PC-9 (cell line): ENCODE measurements at regions of chrX and their contacts with region 1.

Region 1: DNA sequence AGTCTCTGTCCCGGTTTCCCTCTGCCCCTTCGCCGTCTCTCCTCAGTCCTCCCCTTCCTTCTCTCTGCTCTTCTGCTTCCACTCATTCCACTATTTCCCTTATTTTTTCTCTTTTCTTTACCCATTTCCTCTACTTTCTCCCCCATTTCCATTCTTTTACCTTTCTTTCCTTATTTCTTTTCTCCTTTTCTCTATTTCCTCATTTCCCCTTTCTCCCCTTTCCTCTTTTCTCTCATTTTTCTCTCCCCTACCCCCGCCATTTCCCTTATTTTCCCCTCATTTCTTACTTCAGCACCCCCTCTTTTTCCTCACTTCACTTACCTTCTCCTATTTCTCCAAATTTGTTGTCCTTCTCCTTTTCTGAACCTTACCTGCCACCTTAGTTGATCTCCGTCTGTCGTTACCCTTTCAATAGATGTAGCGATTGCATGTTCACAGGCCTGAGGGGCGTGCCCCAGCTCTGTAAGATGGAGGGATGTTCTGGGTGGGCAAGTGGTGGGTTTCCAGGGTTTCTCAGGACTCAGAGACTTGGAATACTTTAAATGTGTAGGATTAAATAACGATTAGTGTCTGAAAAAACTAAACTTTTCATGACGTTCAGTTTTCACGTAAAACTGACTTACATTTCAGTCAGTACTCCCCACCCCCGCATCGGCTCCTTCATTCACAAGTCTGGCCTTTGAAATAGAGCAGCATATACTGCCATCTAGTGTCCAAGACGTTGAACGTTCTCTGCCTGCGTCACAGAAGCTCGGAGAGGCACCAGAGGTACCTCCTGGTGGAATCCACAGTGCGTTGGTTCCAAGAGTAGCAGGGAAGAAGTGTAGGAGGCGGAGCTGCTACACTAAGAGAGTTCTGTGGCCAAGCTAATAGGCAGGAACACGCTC is 641 bp upstream of the NCBP2L start:
- DNase-seq: peak; percentile 78 to 85
- H3K4me3 ChIP-seq: peak overlapping the region; percentile 82; the same call in 1 of the 2 replicates
- H3K27ac ChIP-seq: no peak overlapping the region
- H3K4me1 ChIP-seq: peaks cover 37% of the 10 kb centered on the region
- H3K27me3 ChIP-seq: no peaks in the 10 kb centered on the region
- CTCF ChIP-seq: peak; percentile 93

Region 2: DNA sequence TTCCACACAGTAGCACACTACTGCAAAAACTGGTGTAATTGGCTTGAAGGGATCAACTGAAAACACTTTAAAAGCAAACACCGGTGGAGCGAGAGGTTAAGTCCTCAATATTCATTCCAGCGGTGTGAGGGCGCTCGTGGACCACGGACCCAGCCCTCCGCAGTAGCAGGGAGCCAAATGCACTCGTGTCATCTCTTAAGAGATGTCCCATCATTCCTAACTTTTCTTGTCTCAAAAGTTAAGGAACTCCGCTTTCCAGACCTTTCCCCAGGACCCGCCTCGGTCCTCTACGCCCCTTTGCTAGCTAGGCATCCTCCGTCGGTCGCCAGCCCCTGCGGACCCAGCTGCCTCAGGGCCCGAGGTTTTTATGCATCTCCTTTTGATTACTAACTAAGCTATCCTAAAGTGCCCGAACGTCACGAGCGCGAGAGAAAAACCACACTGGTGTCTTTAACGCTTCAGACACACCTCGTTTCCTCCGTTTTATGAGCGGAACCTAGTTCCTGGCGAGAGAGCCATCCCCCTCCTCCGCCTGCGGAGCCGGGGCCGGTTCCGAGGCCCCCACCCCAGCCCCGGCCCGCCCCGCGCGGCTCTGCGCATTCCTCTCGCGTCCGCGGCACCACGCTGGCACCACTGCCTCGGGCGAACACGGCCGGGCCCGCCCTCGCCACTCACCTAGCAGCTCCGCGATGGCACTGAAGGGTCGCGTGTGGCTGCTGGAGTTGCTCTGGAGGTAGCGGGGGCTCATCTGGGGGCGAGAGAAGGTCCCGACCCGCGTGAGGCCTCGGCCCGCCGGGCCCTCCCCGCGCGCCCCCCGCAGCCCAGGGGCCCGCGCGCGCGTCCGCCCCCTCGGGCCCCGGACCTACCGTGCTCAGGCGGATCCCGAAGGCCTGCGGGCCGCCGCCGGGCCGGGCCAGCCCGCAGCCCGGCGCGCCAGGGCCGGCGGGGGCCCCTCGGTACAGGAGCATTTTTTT is 777.6 kb before region 1 on chrX:
- CTCF ChIA-PET with region 1: no interaction called
- POLR2A ChIA-PET with region 1: no interaction called
- intact Hi-C with region 1: loop called (anchors 1 kb)
- DNase-seq: peak; percentile 47 to 48
- H3K4me3 ChIP-seq: peak overlapping the region; percentile 75
- H3K27ac ChIP-seq: no peak overlapping the region
- H3K4me1 ChIP-seq: 0 out of 2 replicates have a peak, but pooled peaks cover 6% of the 10 kb centered on the region
- H3K27me3 ChIP-seq: no peaks in the 10 kb centered on the region
- CTCF ChIP-seq: peak; percentile 66

Region 3: GRCh38 chrX:107537815-107538214 is 239.1 kb before region 1 on chrX:
- CTCF ChIA-PET with region 1: no interaction called
- POLR2A ChIA-PET with region 1: no interaction called
- intact Hi-C with region 1: loop called (anchors 1 kb)
- DNase-seq: peak; percentile 40 to 52
- H3K4me3 ChIP-seq: no peak overlapping the region
- H3K27ac ChIP-seq: no peak overlapping the region
- H3K4me1 ChIP-seq: peaks cover 3% of the 10 kb centered on the region; the same call in 1 of the 2 replicates
- H3K27me3 ChIP-seq: no peaks in the 10 kb centered on the region
- CTCF ChIP-seq: peak; percentile 88

Region 4: DNA sequence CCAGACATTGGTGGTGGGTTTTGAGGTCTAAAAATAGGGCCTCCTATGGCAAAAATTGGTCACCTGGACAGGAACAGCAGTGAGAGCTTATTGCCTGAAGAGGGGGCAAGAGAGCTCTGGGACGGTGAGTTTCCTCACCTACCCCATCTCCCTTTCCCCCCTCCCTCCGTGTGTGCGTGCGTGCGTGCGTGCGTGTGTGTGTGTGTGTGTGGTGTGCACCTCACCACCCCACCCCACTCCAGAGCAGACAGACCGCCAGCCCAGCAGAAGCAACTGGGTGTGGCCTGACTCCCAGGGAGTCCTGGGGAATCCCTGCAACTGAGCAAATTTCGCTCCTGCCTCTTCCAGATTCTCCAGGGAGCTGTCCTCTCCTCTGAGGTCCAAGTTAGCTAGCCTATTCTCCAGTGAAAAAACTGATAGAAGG is 103.9 kb before region 1 on chrX:
- CTCF ChIA-PET with region 1: interaction called, 21 read pairs
- POLR2A ChIA-PET with region 1: no interaction called
- intact Hi-C with region 1: loop called (anchors 1 kb)
- DNase-seq: peak; percentile 56 to 70
- H3K4me3 ChIP-seq: no peak overlapping the region; the same call in 1 of the 2 replicates
- H3K27ac ChIP-seq: no peak overlapping the region
- H3K4me1 ChIP-seq: peaks cover 49% of the 10 kb centered on the region
- H3K27me3 ChIP-seq: no peaks in the 10 kb centered on the region
- CTCF ChIP-seq: peak; percentile 82

Region 5: DNA sequence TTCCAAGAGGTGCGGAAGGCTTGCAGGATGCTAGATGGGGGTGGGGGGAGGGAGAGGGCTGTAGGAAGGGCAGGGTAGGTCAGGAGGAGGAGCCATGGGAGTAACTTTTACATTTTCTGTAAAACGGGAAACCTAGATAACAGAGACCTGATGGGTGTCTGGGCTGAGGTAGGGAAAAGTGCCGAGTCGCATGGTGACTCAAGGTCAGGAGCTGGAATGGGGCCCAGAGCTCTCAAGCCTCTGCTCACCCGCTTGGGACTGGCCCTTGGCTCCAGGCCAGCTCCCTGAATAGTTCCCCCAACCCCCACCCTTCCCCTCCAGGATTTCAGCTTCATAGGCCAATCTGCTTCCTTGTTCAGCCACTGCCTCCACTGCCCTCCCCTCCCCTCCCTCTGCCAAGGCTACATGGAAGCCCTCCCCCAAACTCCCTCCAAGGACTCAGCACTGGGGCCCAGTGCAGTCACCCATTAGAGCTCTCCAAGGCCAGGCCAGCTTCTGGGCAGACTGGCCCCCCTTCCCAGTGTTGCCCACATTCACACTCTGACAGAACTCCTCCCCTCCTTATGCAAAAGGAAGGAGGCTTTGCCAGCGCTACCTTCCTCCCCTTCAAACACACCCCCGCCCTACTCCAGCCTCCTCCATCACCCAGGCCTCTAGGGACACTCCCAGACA is 44.9 kb before region 1 on chrX:
- CTCF ChIA-PET with region 1: interaction called, 7 read pairs
- POLR2A ChIA-PET with region 1: interaction called, 8 read pairs
- intact Hi-C with region 1: loop called (anchors 2 kb)
- DNase-seq: peak; percentile 93 to 95
- H3K4me3 ChIP-seq: no peak overlapping the region
- H3K27ac ChIP-seq: peak overlapping the region; percentile 63
- H3K4me1 ChIP-seq: peaks cover 81% of the 10 kb centered on the region
- H3K27me3 ChIP-seq: no peaks in the 10 kb centered on the region
- CTCF ChIP-seq: no peak

Region 6: GRCh38 chrX:108036298-108036973 is 259.5 kb after region 1 on chrX:
- CTCF ChIA-PET with region 1: no interaction called
- POLR2A ChIA-PET with region 1: no interaction called
- intact Hi-C with region 1: no loop called
- DNase-seq: peak; percentile 43 to 99
- H3K4me3 ChIP-seq: no peak overlapping the region
- H3K27ac ChIP-seq: peak overlapping the region; percentile 84
- H3K4me1 ChIP-seq: peaks cover 29% of the 10 kb centered on the region
- H3K27me3 ChIP-seq: no peaks in the 10 kb centered on the region
- CTCF ChIP-seq: no peak